BJ (cell line): ENCODE measurements at regions of chr22 and their contacts with region 1.

Region 1: DNA sequence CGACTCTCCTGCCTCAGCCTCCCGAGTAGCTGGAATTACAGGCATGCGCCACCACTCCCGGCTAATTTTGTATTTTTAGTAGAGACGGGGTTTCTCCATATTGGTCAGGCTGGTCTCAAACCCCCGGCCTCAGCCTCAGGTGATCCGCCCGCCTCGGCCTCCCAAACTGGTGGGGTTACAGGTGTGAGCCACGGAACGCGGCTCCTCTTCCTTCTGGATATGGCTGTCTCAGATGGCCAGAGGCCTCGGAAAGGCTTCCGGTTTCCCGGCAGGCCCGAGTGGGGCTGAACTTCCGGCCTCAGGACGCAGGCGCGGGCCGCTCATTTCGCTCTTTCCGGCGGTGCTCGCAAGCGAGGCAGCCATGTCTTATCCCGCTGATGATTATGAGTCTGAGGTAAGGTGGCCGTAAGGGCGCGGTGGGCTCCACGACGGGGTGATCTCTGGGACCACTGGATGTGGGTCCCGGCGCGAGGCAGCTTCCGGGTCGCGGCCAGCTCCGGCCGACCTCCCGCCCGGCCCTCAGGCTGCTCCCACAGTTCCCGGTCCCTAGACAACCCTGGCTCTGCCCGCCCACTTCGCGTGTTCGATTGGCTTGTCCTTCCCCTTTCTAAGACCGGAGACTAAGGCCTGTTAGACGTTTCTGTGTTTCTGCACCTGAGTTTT is at the start of gene EIF3L:
- DNase-seq: peak; percentile 42
- H3K4me3 ChIP-seq: peak within 1 kb of the TSS; percentile 92
- H3K27me3 ChIP-seq: no peaks in the 10 kb centered on the region
- CTCF ChIP-seq: no peak
- polyA plus RNA-seq, gene EIF3L: 705 and 755 TPM in 2 replicates

Region 2: DNA sequence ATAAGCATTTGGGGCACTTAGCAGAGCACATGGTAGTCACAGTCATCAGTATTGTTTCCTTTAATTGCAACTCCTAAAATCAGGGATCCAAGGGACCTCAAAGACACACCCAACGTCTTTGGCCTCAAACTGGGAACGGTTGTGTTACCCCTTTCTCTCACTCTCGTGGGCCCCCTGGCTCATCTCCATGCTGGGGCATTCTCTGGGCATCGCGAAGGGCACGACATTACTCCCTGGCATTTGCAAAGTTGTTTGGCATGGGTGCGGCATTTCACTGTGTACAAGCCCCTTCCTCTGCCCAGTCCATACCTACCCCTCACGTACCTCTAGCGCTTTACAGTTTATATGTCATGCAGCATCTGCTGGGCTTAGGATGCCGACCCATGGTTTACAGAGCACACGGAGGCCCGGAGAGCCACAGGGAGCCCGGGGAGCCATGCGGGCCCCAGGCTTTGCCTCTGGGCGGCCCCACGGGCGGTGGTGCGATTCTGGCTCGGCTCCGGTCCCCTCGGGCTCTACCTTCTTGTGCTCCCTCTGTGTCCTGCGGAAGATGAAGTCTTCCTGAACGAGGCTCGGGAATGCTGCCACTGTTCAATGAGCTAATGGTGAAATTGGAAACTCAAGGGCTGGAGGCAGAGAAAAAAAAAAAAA is 1123.7 kb before region 1 on chr22:
- CTCF ChIA-PET with region 1: no interaction called
- POLR2A ChIA-PET with region 1: interaction called, 10 read pairs
- DNase-seq: no peak
- H3K4me3 ChIP-seq: no peak overlapping the region
- H3K27me3 ChIP-seq: peaks cover 18% of the 10 kb centered on the region
- CTCF ChIP-seq: no peak